Prostate gland (tissue), 2 donors: ENCODE measurements at regions of chrX and their contacts with region 1.

Region 1: DNA sequence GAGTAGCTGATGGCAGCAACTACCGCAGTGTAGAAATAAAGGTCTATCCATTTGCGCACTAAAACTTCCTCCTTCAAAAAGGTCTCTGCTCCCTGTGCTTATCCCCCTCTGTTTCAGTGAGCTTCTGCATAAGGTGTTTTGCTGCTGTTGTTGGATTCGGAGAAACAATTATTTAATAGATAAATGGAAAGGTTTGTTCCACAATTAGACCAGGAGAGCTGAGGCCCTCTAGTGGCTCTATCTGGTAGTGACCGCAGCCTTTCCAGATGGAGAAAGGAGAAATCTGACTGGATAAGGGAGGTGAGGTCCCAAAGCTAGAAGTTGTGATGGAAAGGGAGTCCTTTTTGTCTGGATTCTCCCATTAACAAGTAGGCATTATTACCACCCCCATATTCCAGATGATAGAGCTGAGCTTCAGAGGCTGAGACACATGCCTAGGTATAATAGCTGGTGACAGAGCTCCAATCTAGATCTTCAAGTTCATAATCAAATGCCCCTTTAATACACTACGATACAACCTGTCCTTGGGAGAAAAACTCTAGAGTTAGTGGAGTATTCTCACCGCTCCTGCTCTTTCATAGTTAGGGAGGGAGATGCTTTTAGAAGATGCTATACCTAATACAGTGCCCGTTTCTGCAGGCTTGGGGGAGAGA is 5.1 kb upstream of the GABRQ start:
- DNase-seq: peak; percentile 10
- H3K4me3 ChIP-seq: no peak overlapping the region
- H3K27ac ChIP-seq: no peak overlapping the region
- H3K4me1 ChIP-seq: no peaks in the 10 kb centered on the region
- H3K27me3 ChIP-seq: no peaks in the 10 kb centered on the region
- CTCF ChIP-seq: peak in 3 of 4 experiments; percentile 45 to 63 (median 47)
- POLR2A ChIP-seq: no peak

Region 2: GRCh38 chrX:151151665-151152267 is 1480.8 kb before region 1 on chrX:
- intact Hi-C with region 1: loop called (anchors 10 kb)
- DNase-seq: peak; percentile 15
- H3K4me3 ChIP-seq: no peak overlapping the region
- H3K27ac ChIP-seq: no peak overlapping the region
- H3K4me1 ChIP-seq: no peaks in the 10 kb centered on the region
- H3K27me3 ChIP-seq: no peaks in the 10 kb centered on the region
- CTCF ChIP-seq: peak; percentile 31 to 69 (median 58)
- POLR2A ChIP-seq: no peak

Region 3: DNA sequence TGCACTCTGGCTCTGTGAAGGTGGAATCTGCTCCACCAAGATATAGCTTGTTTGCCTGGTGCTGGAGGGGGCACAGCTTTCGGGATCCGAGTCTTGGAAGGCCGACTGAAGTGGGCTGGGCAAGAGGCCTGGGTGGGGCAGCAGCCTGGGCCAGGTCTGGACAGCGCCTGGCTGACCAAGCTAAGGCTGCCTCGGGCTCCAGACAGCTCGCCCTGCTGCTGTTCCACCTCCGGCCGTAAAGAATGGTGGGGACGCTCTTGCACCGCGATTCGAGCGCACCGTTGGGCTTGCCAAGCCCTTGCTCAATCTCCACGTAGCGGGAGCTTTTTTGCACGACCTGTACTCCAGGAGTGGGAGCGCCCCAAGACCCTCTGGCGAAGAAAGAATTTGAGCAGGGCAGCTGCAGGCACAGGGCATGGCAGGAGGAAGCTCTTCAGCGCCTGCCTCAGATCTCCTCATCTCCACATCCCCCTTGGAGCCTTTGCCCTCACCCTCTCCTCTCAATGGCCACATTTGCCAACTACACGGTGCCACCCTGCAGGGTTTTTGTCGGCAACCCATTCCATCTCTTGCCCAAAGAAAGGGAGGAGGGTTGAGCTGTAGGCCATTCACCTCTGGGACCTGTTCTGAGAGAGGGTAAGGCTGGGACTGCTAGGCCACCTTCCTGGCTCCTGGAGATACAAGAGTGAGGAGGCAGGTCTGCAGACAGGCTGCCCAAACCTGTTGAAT is 879.1 kb before region 1 on chrX:
- intact Hi-C with region 1: loop called (anchors 5 kb)
- DNase-seq: peak; percentile 40
- H3K4me3 ChIP-seq: no peak overlapping the region
- H3K27ac ChIP-seq: no peak overlapping the region
- H3K4me1 ChIP-seq: no peaks in the 10 kb centered on the region
- H3K27me3 ChIP-seq: no peaks in the 10 kb centered on the region
- CTCF ChIP-seq: peak; percentile 40 to 84 (median 53)
- POLR2A ChIP-seq: no peak